Right ventricle myocardium inferior (tissue), 1 donor: ENCODE measurements at regions of chr2 and their contacts with region 1.

Region 1: GRCh38 chr2:178128836-178129630 is 16.8 kb downstream of the RBM45 start:
- DNase-seq: no peak
- ATAC-seq: no peak

Region 2: DNA sequence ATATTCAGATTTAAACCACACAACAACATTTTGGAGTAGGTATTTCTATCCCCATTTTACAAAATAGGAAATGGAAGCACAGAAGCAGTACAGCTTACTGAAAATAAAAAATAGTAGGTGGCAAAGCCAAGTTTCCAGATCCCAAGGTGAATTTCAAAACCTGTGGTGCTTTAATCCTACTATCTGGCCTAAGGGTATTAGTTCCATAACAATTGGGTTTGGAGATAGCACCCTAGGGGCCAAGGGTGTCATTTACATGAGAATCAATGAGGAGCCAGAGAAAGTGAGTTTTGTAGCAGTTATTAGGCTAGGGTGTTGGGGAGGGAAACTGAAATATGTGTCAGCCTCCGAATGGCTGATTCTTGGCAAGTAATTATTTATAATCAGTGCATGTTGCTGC is 90.2 kb after region 1 on chr2:
- intact Hi-C with region 1: no loop called
- DNase-seq: no peak
- ATAC-seq: no peak

Region 3: GRCh38 chr2:178280244-178280852 is 151.3 kb after region 1 on chr2:
- intact Hi-C with region 1: loop called (anchors 2 kb)
- DNase-seq: no peak
- ATAC-seq: peak; percentile 60